ENCODE measurements at regions of chr9 and their contacts with region 1.

Region 1: DNA sequence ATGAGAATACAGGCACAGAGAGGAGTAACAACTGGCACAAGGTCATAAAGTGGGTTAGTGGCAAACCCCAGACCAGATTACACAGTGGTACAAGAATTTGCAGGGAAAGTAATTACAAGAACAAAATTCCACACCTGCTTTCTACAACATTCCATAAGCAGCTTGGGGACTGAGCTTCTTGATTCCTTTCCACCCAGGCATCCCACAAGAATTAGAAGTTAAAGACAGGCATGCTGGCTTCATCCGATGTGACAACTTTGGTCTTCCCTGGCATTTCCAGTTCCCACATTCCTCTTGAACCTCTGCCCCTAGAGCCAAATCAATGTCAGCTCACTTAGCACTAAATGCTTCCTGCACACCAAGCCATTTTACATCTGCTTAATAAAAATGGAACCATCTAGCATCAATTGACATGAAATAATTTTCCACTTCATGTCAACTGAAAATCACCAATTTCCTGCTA is 435.8 kb upstream of the PAPPA start:
- DNase-seq: no peak
- H3K4me3 ChIP-seq: no peak overlapping the region
- H3K27ac ChIP-seq: no peak overlapping the region
- H3K4me1 ChIP-seq: no peaks in the 10 kb centered on the region
- H3K27me3 ChIP-seq: no peaks in the 10 kb centered on the region
- CTCF ChIP-seq: no peak
- EP300 ChIP-seq: no peak
- POLR2A ChIP-seq: no peak

Region 2: GRCh38 chr9:114995681-114996221 is 722.0 kb before region 1 on chr9:
- intact Hi-C with region 1: loop called in 1 of 4 experiments (anchors 5 kb)
- DNase-seq: no peak
- H3K4me3 ChIP-seq: no peak overlapping the region
- H3K27ac ChIP-seq: no peak overlapping the region
- H3K4me1 ChIP-seq: no peaks in the 10 kb centered on the region
- H3K27me3 ChIP-seq: no peaks in the 10 kb centered on the region
- CTCF ChIP-seq: no peak
- EP300 ChIP-seq: no peak
- POLR2A ChIP-seq: no peak

Region 3: DNA sequence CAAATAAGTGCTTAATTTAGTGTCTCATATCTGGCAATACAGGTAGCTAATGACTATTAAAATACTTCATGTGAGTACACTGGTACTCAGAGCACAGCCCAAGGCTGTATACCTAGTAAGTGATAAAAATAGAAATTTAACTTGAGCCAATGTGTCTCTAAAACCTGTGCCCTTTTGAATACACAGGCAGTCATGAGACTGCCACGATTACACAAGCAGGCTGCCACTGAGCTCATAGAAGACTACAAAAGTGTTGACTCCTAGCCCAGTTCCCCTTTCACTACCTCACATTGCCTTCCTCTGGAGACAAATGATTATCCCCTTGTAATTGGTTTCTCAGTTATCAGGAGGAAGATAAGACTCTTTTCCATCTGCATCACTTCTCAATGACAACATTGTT is 369.5 kb after region 1 on chr9:
- intact Hi-C with region 1: no loop called
- DNase-seq: no peak
- H3K4me3 ChIP-seq: no peak overlapping the region
- H3K27ac ChIP-seq: no peak overlapping the region
- H3K4me1 ChIP-seq: no peaks in the 10 kb centered on the region
- H3K27me3 ChIP-seq: no peaks in the 10 kb centered on the region
- CTCF ChIP-seq: no peak
- EP300 ChIP-seq: no peak
- POLR2A ChIP-seq: no peak